CD8-positive, alpha-beta T cell (primary cell): ENCODE measurements at regions of chr1 and their contacts with region 1.

Region 1: GRCh38 chr1:224434691-224435317 is at the start of gene WDR26:
- DNase-seq: peak; percentile 65 to 94 (median 83)
- ATAC-seq: peak; percentile 81
- H3K4me3 ChIP-seq: peak within 1 kb of the TSS; percentile 84 to 99
- H3K4me3 Mint-ChIP-seq: peak within 1 kb of the TSS; percentile 97
- H3K27ac ChIP-seq: peak within 1 kb of the TSS; percentile 94 to 98
- H3K27ac Mint-ChIP-seq: peak within 1 kb of the TSS; percentile 99
- H3K4me1 ChIP-seq: peaks cover 50% of the 10 kb centered on the region
- H3K4me1 Mint-ChIP-seq: peaks cover 56% of the 10 kb centered on the region
- H3K27me3 ChIP-seq: no peaks in the 10 kb centered on the region
- H3K27me3 Mint-ChIP-seq: no peaks in the 10 kb centered on the region
- CTCF ChIP-seq: peak; percentile 18
- total RNA-seq, gene WDR26: 176 to 181 TPM

Region 2: DNA sequence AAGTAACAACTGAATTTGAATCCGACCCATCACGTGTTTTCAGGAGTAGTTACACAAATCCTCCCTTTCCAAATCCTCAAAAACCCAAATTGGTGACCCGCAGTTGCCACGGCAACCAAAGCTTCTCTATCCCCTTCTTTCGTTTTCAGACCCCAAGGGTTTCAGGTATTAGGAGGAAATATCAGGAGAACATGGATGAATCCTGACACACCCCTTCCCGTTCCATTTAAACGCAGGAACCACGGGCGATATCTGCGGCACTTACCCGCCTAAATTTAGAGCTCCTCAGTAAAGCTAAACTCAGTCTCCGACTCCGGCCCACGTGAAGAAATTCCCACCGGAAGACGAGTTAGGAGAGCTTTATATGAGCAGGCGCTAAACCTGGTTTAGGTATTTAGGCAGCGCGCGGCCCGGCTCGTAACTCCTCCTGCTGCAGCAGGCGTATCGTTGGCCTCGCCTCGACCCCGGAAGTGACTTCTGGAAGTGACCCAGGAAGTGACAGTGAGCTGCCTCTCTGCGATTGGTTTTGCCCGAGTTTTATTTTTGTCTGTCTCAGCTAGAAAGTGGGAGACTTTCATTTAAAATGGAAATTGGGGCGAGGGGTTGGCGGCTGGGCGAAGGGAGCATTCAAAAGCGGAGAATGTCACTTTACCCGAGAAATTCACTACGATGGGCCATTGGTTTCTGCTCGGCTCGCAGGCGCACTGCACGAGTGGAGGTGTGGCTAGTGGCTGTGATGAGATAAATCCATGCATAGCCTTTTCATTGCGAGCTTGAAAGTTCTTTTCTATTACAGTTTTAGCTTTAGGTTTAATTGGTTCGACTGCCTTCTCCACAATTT is 1845.1 kb before region 1 on chr1 and contains the start of gene TAF1A:
- CTCF ChIA-PET with region 1: no interaction called
- POLR2A ChIA-PET with region 1: no interaction called
- intact Hi-C with region 1: loop called in 1 of 2 experiments (anchors 5 kb)
- DNase-seq: peak; percentile 69 to 93 (median 86)
- ATAC-seq: peak; percentile 98
- H3K4me3 ChIP-seq: peak within 1 kb of the TSS; percentile 68 to 77
- H3K4me3 Mint-ChIP-seq: peak within 1 kb of the TSS; percentile 98
- H3K27ac ChIP-seq: peak within 1 kb of the TSS; percentile 85 to 87
- H3K27ac Mint-ChIP-seq: peak within 1 kb of the TSS; percentile 99
- H3K4me1 ChIP-seq: peaks cover 11% of the 10 kb centered on the region
- H3K4me1 Mint-ChIP-seq: peaks cover 52% of the 10 kb centered on the region
- H3K27me3 ChIP-seq: no peaks in the 10 kb centered on the region
- H3K27me3 Mint-ChIP-seq: no peaks in the 10 kb centered on the region
- CTCF ChIP-seq: no peak
- total RNA-seq, gene TAF1A: 5.3 to 5.6 TPM

Region 3: GRCh38 chr1:223712194-223712849 is 722.5 kb before region 1 on chr1 and contains the start of gene CAPN2:
- CTCF ChIA-PET with region 1: no interaction called
- POLR2A ChIA-PET with region 1: no interaction called
- intact Hi-C with region 1: loop called in 1 of 2 experiments (anchors 10 kb)
- DNase-seq: peak; percentile 20 to 83 (median 58)
- ATAC-seq: peak; percentile 49
- H3K4me3 ChIP-seq: peak within 1 kb of the TSS; percentile 64 to 81
- H3K4me3 Mint-ChIP-seq: peak within 1 kb of the TSS; percentile 90
- H3K27ac ChIP-seq: peak within 1 kb of the TSS; percentile 62 to 85
- H3K27ac Mint-ChIP-seq: peak within 1 kb of the TSS; percentile 93
- H3K4me1 ChIP-seq: peaks cover 57% of the 10 kb centered on the region
- H3K4me1 Mint-ChIP-seq: peaks cover 56% of the 10 kb centered on the region
- H3K27me3 ChIP-seq: no peaks in the 10 kb centered on the region
- H3K27me3 Mint-ChIP-seq: no peaks in the 10 kb centered on the region
- CTCF ChIP-seq: peak; percentile 50
- total RNA-seq, gene CAPN2: 83.0 to 84.7 TPM

Region 4: GRCh38 chr1:224182866-224183590 is 251.8 kb before region 1 on chr1 and contains the start of gene DEGS1:
- CTCF ChIA-PET with region 1: no interaction called
- POLR2A ChIA-PET with region 1: interaction called, 6 read pairs
- intact Hi-C with region 1: loop called (anchors 2 to 10 kb)
- DNase-seq: peak; percentile 71 to 92 (median 84)
- ATAC-seq: peak; percentile 77
- H3K4me3 ChIP-seq: peak within 1 kb of the TSS; percentile 70 to 90
- H3K4me3 Mint-ChIP-seq: peak within 1 kb of the TSS; percentile 90
- H3K27ac ChIP-seq: peak within 1 kb of the TSS; percentile 88 to 94
- H3K27ac Mint-ChIP-seq: peak within 1 kb of the TSS; percentile 95
- H3K4me1 ChIP-seq: peaks cover 33% of the 10 kb centered on the region
- H3K4me1 Mint-ChIP-seq: peaks cover 48% of the 10 kb centered on the region
- H3K27me3 ChIP-seq: no peaks in the 10 kb centered on the region
- H3K27me3 Mint-ChIP-seq: no peaks in the 10 kb centered on the region
- CTCF ChIP-seq: no peak
- total RNA-seq, gene DEGS1: 52.1 to 54.7 TPM

Region 5: DNA sequence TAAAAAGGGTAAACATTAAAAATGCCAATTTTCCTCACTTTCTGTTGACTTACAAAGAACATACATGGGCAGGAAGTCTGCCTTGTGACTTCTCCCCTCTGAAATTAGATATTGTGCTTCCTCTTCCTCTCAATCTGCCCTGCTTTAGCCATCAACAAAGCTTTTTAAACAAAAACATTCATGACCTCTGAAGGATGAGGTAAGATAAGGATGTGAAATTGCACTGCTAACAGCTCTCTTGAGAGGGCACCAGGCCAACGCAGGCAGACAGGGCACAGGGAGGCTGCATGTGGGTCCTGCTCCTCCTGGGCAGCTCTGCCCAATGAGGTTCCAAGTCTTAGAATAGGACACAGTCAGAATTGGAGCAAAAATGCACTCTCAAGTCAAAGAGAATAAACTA is 189.6 kb before region 1 on chr1:
- CTCF ChIA-PET with region 1: no interaction called
- POLR2A ChIA-PET with region 1: no interaction called
- intact Hi-C with region 1: no loop called
- DNase-seq: peak in 7 of 9 experiments; percentile 5 to 68 (median 23)
- ATAC-seq: peak; percentile 64
- H3K4me3 ChIP-seq: no peak overlapping the region
- H3K4me3 Mint-ChIP-seq: peak overlapping the region; percentile 2
- H3K27ac ChIP-seq: peak overlapping the region; percentile 2 to 43
- H3K27ac Mint-ChIP-seq: peak overlapping the region; percentile 93
- H3K4me1 ChIP-seq: peaks cover 19% of the 10 kb centered on the region
- H3K4me1 Mint-ChIP-seq: peaks cover 25% of the 10 kb centered on the region
- H3K27me3 ChIP-seq: no peaks in the 10 kb centered on the region
- H3K27me3 Mint-ChIP-seq: no peaks in the 10 kb centered on the region
- CTCF ChIP-seq: no peak

Region 6: GRCh38 chr1:224377676-224378006 is 57.2 kb before region 1 on chr1:
- CTCF ChIA-PET with region 1: no interaction called
- POLR2A ChIA-PET with region 1: interaction called, 4 read pairs
- intact Hi-C with region 1: loop called in 1 of 2 experiments (anchors 5 kb)
- DNase-seq: peak in 4 of 9 experiments; percentile 7 to 62 (median 29)
- ATAC-seq: peak; percentile 59
- H3K4me3 ChIP-seq: no peak overlapping the region
- H3K4me3 Mint-ChIP-seq: peak overlapping the region; percentile 40
- H3K27ac ChIP-seq: peak overlapping the region in 1 of 2 experiments; percentile 69
- H3K27ac Mint-ChIP-seq: peak overlapping the region; percentile 87
- H3K4me1 ChIP-seq: peaks cover 85% of the 10 kb centered on the region
- H3K4me1 Mint-ChIP-seq: peaks cover 90% of the 10 kb centered on the region
- H3K27me3 ChIP-seq: no peaks in the 10 kb centered on the region
- H3K27me3 Mint-ChIP-seq: no peaks in the 10 kb centered on the region
- CTCF ChIP-seq: no peak

Region 7: GRCh38 chr1:224454397-224455066 is 19.7 kb after region 1 on chr1:
- CTCF ChIA-PET with region 1: interaction called, 14 read pairs
- POLR2A ChIA-PET with region 1: interaction called, 3 read pairs
- intact Hi-C with region 1: loop called (anchors 1 to 2 kb)
- DNase-seq: no peak
- ATAC-seq: no peak
- H3K4me3 ChIP-seq: no peak overlapping the region
- H3K4me3 Mint-ChIP-seq: no peak overlapping the region
- H3K27ac ChIP-seq: no peak overlapping the region
- H3K27ac Mint-ChIP-seq: no peak overlapping the region
- H3K4me1 ChIP-seq: peaks cover 7% of the 10 kb centered on the region
- H3K4me1 Mint-ChIP-seq: peaks cover 16% of the 10 kb centered on the region
- H3K27me3 ChIP-seq: no peaks in the 10 kb centered on the region
- H3K27me3 Mint-ChIP-seq: no peaks in the 10 kb centered on the region
- CTCF ChIP-seq: no peak

Region 8: GRCh38 chr1:225567590-225568194 is 1132.9 kb after region 1 on chr1:
- CTCF ChIA-PET with region 1: no interaction called
- POLR2A ChIA-PET with region 1: no interaction called
- intact Hi-C with region 1: no loop called
- DNase-seq: no peak
- ATAC-seq: no peak
- H3K4me3 ChIP-seq: no peak overlapping the region
- H3K4me3 Mint-ChIP-seq: no peak overlapping the region
- H3K27ac ChIP-seq: no peak overlapping the region
- H3K27ac Mint-ChIP-seq: no peak overlapping the region
- H3K4me1 ChIP-seq: no peaks in the 10 kb centered on the region
- H3K4me1 Mint-ChIP-seq: no peaks in the 10 kb centered on the region
- H3K27me3 ChIP-seq: no peaks in the 10 kb centered on the region
- H3K27me3 Mint-ChIP-seq: no peaks in the 10 kb centered on the region
- CTCF ChIP-seq: no peak